ENCODE measurements at regions of chr12 and their contacts with region 1.

Region 1: DNA sequence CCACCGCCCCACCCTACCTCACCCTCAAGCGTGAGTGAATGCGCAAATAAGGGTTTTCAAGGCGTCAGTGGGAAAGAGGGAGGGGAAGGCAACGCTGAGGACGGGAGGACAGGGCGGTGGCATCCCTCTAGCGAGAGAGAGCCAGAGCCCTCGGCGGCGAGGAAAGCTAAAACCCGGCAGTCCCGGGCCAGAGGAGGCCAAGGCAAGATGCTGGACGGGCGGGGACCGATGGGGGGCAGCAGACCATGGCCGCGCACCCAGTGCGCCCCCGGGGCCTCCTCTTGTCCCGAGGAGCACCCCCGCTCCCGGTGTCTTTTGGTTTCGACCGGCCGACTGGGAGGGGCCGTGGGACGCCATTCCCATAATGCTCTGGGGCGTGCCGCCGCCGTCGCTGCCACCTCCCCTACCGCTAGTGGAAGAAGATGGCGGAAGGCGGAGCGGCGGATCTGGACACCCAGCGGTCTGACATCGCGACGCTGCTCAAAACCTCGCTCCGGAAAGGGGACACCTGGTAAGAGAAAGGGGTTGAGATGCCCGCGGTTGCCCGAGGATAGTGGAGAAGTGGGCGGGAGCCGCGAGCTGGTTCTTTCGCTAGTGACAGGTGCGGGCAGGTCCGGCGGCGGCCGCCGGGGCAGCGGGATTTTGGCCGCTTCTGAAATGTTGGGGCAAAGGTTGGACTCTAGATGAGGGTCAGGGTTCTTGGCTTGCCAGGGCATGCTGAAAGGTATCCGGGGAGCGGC is at the start of gene USP15:
- DNase-seq: peak; percentile 93
- H3K4me3 ChIP-seq: peak within 1 kb of the TSS; percentile 86
- H3K27ac ChIP-seq: peak within 1 kb of the TSS; percentile 94
- H3K27me3 ChIP-seq: no peaks in the 10 kb centered on the region
- CTCF ChIP-seq: peak; percentile 79
- polyA plus RNA-seq, gene USP15: 36.9 and 64.4 TPM in 2 replicates

Region 2: DNA sequence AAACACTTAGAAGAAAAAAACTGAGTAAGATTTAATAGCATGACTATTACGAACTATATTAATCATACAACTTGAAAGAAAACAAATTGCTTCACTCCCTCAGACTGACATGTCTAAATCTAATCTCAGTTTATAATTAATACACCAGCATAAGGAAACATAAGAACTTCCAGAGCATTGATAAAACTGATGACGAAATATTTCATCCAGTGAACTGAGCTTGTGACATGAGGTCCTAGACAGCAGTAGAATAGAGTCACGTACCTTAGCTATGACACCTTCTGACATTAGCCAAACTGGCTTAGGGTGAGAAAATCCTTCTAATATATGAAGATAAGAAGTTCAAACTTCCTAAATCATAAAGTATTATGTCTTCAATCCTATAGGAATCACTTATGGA is 78.7 kb before region 1 on chr12:
- CTCF ChIA-PET with region 1: no interaction called
- POLR2A ChIA-PET with region 1: no interaction called
- DNase-seq: no peak
- H3K4me3 ChIP-seq: no peak overlapping the region
- H3K27ac ChIP-seq: no peak overlapping the region
- H3K27me3 ChIP-seq: no peaks in the 10 kb centered on the region
- CTCF ChIP-seq: no peak

Region 3: DNA sequence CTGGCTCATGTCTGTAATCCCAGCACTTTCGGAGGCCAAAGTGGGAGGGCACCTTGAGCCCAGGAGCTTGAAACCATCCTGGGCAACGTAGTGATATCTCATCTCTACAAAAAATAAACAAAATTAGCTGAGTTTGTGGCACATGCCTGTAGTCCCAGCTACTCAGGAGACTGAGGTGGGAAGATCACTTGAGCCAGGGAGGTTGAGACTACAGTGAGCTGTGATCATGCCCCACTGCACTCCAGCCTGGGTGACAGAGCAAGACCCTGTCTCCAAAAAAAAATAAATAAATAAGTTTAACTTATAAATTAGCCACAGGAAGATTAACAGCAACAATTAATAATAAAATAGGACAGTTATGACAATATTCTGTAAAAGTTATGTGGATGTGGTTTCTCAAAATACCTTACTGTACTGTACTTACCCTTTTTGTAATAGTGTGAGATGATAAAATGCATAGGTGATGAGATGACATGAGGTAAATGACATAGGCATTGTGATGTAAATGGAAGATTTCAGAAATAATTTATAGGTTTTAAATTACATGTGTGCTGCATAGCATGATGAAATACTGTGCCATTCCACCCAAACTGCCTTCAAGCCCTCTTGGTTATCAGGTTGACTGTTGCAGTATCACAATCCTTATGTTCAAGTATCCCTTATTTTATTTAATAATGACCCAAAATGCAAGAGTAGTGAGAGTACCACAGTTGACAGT is 22.1 kb after region 1 on chr12:
- CTCF ChIA-PET with region 1: interaction called, 15 read pairs
- POLR2A ChIA-PET with region 1: interaction called, 3 read pairs
- DNase-seq: no peak
- H3K4me3 ChIP-seq: no peak overlapping the region
- H3K27ac ChIP-seq: no peak overlapping the region
- H3K27me3 ChIP-seq: no peaks in the 10 kb centered on the region
- CTCF ChIP-seq: no peak

Region 4: GRCh38 chr12:62319058-62319457 is 58.9 kb after region 1 on chr12:
- CTCF ChIA-PET with region 1: no interaction called
- POLR2A ChIA-PET with region 1: no interaction called
- DNase-seq: no peak
- H3K4me3 ChIP-seq: no peak overlapping the region
- H3K27ac ChIP-seq: no peak overlapping the region
- H3K27me3 ChIP-seq: no peaks in the 10 kb centered on the region
- CTCF ChIP-seq: no peak